CD8-positive, alpha-beta T cell (primary cell): ENCODE measurements at regions of chr2 and their contacts with region 1.

Region 1: DNA sequence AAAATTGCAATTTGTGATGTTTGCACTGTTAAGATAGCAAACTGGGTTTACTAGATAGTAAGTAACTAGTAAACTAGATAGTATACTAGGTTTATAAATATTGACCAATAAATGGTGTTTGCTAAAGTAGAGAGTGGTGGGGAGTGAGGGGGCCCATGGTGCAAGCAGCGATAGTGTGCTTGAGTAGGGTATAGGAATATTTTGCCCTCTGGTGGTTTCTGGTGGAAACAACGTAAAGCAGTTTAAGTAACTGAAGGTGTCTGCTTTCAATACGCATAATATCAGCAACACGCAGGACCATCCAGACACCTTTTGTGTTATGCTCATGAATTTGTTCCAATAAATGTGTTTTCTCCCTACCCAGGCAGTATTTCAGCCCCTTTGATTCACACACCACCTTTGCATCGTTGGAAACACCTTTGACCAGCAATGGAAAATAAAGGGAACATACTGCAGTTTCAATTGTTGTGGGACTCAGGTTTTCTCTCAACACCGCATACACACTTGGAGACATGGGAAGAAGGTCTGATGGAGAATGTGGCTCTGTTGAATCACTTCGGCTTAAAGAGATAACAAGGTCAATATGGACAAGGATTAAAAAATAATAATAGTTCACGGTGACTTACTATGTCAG is 16.7 kb upstream of the STAT1 start:
- DNase-seq: peak in 4 of 9 experiments; percentile 41 to 81 (median 60)
- ATAC-seq: peak; percentile 90
- H3K4me3 ChIP-seq: no peak overlapping the region
- H3K4me3 Mint-ChIP-seq: no peak overlapping the region
- H3K27ac ChIP-seq: peak overlapping the region in 1 of 2 experiments; percentile 58
- H3K27ac Mint-ChIP-seq: peak overlapping the region; percentile 62
- H3K4me1 ChIP-seq: peaks cover 26% of the 10 kb centered on the region
- H3K4me1 Mint-ChIP-seq: peaks cover 26% of the 10 kb centered on the region
- H3K27me3 ChIP-seq: no peaks in the 10 kb centered on the region
- H3K27me3 Mint-ChIP-seq: no peaks in the 10 kb centered on the region
- CTCF ChIP-seq: peak; percentile 76

Region 2: DNA sequence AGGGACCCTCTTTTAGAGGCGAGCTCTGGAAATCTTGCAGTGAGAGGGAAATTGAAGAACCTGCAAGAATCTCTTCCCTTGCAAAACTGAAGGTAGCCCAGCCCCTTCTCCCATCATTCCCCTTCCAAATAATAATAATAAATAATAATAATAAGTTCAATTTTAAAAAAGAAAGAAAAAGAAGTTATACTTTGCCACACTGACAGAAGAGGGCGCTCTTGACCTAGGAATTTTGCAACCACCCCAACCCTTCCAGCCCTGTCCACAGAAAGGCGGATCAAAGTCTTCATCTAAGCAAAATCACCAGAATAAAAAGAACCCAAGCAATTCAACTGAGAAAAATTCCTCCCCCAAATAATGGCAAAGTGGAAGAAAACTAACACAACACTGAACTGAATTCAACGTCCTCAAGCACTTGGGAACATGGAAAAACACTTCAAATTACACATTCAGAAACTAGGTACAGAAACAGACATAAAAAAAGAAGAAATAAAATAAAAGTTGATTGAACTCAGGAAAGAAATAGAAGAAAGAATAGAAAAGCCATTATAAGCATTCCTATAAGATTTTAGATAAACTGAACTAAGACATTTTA is 248.9 kb before region 1 on chr2:
- CTCF ChIA-PET with region 1: interaction called, 7 read pairs
- POLR2A ChIA-PET with region 1: no interaction called
- intact Hi-C with region 1: loop called (anchors 1 kb)
- DNase-seq: peak in 8 of 9 experiments; percentile 6 to 74 (median 48)
- ATAC-seq: peak; percentile 63
- H3K4me3 ChIP-seq: no peak overlapping the region
- H3K4me3 Mint-ChIP-seq: no peak overlapping the region
- H3K27ac ChIP-seq: no peak overlapping the region
- H3K27ac Mint-ChIP-seq: no peak overlapping the region
- H3K4me1 ChIP-seq: no peaks in the 10 kb centered on the region
- H3K4me1 Mint-ChIP-seq: peaks cover 3% of the 10 kb centered on the region
- H3K27me3 ChIP-seq: no peaks in the 10 kb centered on the region
- H3K27me3 Mint-ChIP-seq: peaks cover 7% of the 10 kb centered on the region
- CTCF ChIP-seq: peak; percentile 70

Region 3: GRCh38 chr2:190849774-190850173 is 180.9 kb before region 1 on chr2:
- CTCF ChIA-PET with region 1: interaction called, 7 read pairs
- POLR2A ChIA-PET with region 1: interaction called, 3 read pairs
- intact Hi-C with region 1: loop called in 1 of 2 experiments (anchors 1 kb)
- DNase-seq: no peak
- ATAC-seq: no peak
- H3K4me3 ChIP-seq: no peak overlapping the region
- H3K4me3 Mint-ChIP-seq: no peak overlapping the region
- H3K27ac ChIP-seq: no peak overlapping the region
- H3K27ac Mint-ChIP-seq: no peak overlapping the region
- H3K4me1 ChIP-seq: no peaks in the 10 kb centered on the region
- H3K4me1 Mint-ChIP-seq: peaks cover 2% of the 10 kb centered on the region
- H3K27me3 ChIP-seq: no peaks in the 10 kb centered on the region
- H3K27me3 Mint-ChIP-seq: no peaks in the 10 kb centered on the region
- CTCF ChIP-seq: no peak

Region 4: DNA sequence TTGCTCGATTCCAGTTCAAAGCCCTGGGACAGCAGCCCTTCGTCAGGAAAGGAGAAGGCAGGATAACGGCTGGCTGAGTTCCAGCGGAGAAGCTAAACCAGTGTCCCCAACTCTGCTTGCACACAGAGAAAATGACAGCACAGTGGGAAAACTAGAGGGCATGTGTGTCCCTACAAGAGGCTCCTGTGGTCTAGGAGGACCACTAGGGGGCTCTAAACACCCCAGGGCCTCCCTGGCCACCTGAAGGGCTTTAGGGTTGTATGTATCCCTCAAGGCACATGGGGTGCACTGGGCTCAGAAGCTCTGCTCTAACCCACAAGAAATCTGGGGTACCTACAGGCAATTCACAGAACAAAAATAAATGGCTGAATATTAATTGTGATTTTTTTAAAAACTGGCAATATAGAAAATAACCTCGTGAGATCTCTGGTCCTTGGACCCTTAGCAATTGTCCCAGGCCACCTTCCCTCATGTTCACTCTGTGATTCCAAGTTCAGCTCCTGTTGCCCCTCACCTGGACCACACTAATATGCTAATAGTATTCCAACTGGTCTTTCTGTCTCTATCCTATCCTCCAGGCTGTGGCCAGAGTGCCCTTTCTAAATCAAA is 34.2 kb before region 1 on chr2:
- CTCF ChIA-PET with region 1: interaction called, 17 read pairs
- POLR2A ChIA-PET with region 1: no interaction called
- intact Hi-C with region 1: loop called (anchors 1 to 2 kb)
- DNase-seq: peak in 4 of 9 experiments; percentile 46 to 71 (median 57)
- ATAC-seq: peak; percentile 86
- H3K4me3 ChIP-seq: no peak overlapping the region
- H3K4me3 Mint-ChIP-seq: no peak overlapping the region
- H3K27ac ChIP-seq: peak overlapping the region in 1 of 2 experiments; percentile 28
- H3K27ac Mint-ChIP-seq: peak overlapping the region; percentile 82
- H3K4me1 ChIP-seq: no peaks in the 10 kb centered on the region
- H3K4me1 Mint-ChIP-seq: peaks cover 61% of the 10 kb centered on the region
- H3K27me3 ChIP-seq: no peaks in the 10 kb centered on the region
- H3K27me3 Mint-ChIP-seq: no peaks in the 10 kb centered on the region
- CTCF ChIP-seq: peak; percentile 56

Region 5: GRCh38 chr2:191013932-191014652 is 16.5 kb before region 1 on chr2 and contains the start of gene STAT1:
- CTCF ChIA-PET with region 1: interaction called, 4 read pairs
- POLR2A ChIA-PET with region 1: interaction called, 6 read pairs
- intact Hi-C with region 1: loop called (anchors 1 kb)
- DNase-seq: peak; percentile 93 to 98 (median 96)
- ATAC-seq: peak; percentile 87
- H3K4me3 ChIP-seq: peak within 1 kb of the TSS; percentile 61 to 88
- H3K4me3 Mint-ChIP-seq: no peak within 1 kb of the TSS
- H3K27ac ChIP-seq: peak within 1 kb of the TSS; percentile 91 to 94
- H3K27ac Mint-ChIP-seq: no peak within 1 kb of the TSS
- H3K4me1 ChIP-seq: peaks cover 59% of the 10 kb centered on the region
- H3K4me1 Mint-ChIP-seq: peaks cover 44% of the 10 kb centered on the region
- H3K27me3 ChIP-seq: no peaks in the 10 kb centered on the region
- H3K27me3 Mint-ChIP-seq: no peaks in the 10 kb centered on the region
- CTCF ChIP-seq: no peak
- total RNA-seq, gene STAT1: 66.7 to 69.9 TPM

Region 6: DNA sequence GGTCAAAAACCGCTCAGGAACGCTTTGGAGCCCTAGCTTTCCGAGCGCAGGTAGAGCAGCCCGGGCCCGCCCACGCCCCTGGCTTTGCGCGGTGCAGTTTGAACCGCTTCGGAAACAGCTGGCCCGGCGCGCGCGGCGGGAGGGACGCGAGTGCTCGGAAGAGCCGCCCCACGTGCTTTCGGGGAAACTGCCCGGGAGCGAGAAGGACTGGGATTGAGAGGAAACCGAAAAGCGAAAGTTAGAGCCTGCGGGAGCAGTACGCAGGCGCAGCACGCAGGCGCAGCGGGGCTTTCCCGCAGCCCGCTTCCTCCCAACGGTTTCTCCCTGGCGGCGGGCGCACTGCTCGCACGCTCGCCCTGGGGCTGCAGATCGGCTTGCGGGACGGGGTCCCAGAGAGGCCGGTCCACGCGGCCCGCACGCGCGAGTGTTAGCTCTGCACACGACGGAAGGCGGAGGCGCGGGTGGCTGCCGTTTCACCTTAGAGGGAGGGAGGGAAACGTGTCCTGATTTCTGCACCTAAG is 10.4 kb before region 1 on chr2:
- CTCF ChIA-PET with region 1: interaction called, 9 read pairs
- POLR2A ChIA-PET with region 1: interaction called, 6 read pairs
- intact Hi-C with region 1: loop called in 1 of 2 experiments (anchors 1 kb)
- DNase-seq: peak; percentile 82 to 98 (median 93)
- ATAC-seq: peak; percentile 72
- H3K4me3 ChIP-seq: peak overlapping the region; percentile 73 to 82
- H3K4me3 Mint-ChIP-seq: no peak overlapping the region
- H3K27ac ChIP-seq: peak overlapping the region; percentile 62 to 86
- H3K27ac Mint-ChIP-seq: no peak overlapping the region
- H3K4me1 ChIP-seq: peaks cover 52% of the 10 kb centered on the region
- H3K4me1 Mint-ChIP-seq: peaks cover 28% of the 10 kb centered on the region
- H3K27me3 ChIP-seq: no peaks in the 10 kb centered on the region
- H3K27me3 Mint-ChIP-seq: no peaks in the 10 kb centered on the region
- CTCF ChIP-seq: no peak

Region 7: GRCh38 chr2:191070276-191070675 is 39.6 kb after region 1 on chr2:
- CTCF ChIA-PET with region 1: no interaction called
- POLR2A ChIA-PET with region 1: no interaction called
- intact Hi-C with region 1: no loop called
- DNase-seq: no peak
- ATAC-seq: no peak
- H3K4me3 ChIP-seq: no peak overlapping the region
- H3K4me3 Mint-ChIP-seq: peak overlapping the region; percentile 9
- H3K27ac ChIP-seq: peak overlapping the region in 1 of 2 experiments; percentile 58
- H3K27ac Mint-ChIP-seq: peak overlapping the region; percentile 73
- H3K4me1 ChIP-seq: peaks cover 53% of the 10 kb centered on the region
- H3K4me1 Mint-ChIP-seq: peaks cover 65% of the 10 kb centered on the region
- H3K27me3 ChIP-seq: no peaks in the 10 kb centered on the region
- H3K27me3 Mint-ChIP-seq: no peaks in the 10 kb centered on the region
- CTCF ChIP-seq: no peak

Region 8: DNA sequence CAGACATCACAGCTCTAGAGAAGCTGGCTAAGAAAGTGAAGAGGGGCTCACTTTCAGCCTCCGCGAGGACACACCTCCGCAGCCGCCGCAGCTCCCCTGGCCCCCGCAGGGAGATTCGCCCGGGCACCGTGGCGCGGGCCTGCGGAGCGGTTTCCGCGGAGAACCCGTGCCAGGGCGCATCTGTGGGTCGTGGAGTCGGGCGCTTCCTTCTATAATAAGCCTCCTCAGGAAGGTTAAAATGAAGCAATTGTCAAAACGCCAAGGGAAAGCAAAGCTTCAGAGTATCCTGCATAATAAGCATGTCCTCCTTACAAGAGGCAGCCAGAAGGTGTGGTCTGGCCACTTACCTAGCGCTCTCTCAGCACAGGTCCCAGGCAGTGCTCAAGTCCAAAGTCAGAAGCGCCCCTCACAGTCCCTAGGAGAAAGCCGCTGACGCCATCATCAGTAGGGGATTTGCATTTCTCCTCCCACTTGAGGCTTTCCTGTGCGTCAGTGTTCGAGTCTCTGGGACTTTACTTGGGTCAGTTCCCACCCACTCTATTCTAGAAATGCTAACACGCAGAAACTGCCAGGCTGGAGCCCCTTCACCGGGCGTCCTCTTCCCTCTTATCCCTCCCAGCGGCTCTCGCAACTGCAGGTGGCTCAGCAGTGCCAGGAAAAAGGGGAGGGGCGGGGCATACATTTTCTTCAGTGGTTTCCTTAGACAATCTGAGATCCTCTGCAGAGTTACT is 120.1 kb after region 1 on chr2 and contains the start of gene STAT4:
- CTCF ChIA-PET with region 1: interaction called, 11 read pairs
- POLR2A ChIA-PET with region 1: no interaction called
- intact Hi-C with region 1: no loop called
- DNase-seq: peak; percentile 64 to 98 (median 82)
- ATAC-seq: peak; percentile 82
- H3K4me3 ChIP-seq: peak within 1 kb of the TSS; percentile 80 to 90
- H3K4me3 Mint-ChIP-seq: peak within 1 kb of the TSS; percentile 96
- H3K27ac ChIP-seq: peak within 1 kb of the TSS; percentile 93 to 98
- H3K27ac Mint-ChIP-seq: peak within 1 kb of the TSS; percentile 95
- H3K4me1 ChIP-seq: peaks cover 49% of the 10 kb centered on the region
- H3K4me1 Mint-ChIP-seq: peaks cover 54% of the 10 kb centered on the region
- H3K27me3 ChIP-seq: no peaks in the 10 kb centered on the region
- H3K27me3 Mint-ChIP-seq: no peaks in the 10 kb centered on the region
- CTCF ChIP-seq: no peak
- total RNA-seq, gene STAT4: 136 to 141 TPM